HEK293 (cell line): ENCODE measurements at regions of chr14 and their contacts with region 1.

Region 1: DNA sequence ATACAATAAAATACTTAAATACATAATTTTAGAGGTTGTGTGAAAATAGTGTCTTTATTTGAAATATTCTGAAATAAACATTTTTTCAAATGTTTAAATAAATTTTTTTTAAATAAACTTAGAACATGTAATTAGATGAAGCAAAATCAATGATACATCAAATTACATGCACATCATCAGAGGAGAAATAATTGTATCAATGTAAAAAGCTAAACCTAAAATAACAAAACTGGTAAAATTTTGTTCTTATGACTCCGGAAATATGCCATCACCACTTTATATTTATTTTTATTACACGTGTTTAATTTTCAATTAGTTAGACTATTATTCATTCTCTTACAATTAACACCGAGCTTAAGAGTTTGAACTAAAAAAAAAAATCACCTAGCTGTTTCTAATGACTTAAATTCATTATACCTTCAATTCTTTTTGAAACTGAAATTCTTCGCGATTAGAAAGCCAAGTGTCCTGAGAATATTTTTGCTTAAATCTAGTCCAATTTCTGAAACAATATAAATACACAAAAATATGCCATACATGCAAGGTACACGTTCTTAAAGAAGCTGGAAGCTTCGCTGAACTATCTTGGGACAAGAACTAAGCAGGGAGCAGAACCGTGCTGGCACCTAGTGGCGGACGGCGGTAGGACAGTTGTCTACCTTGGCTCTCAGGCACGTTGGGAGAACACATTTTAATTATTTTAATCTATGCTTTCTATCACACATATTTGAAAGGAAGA is 230.5 kb downstream of the SLC25A21 start:
- H3K4me3 ChIP-seq: no peak overlapping the region
- H3K27ac ChIP-seq: no peak overlapping the region
- H3K4me1 ChIP-seq: peaks cover 13% of the 10 kb centered on the region
- CTCF ChIP-seq: peak; percentile 66

Region 2: DNA sequence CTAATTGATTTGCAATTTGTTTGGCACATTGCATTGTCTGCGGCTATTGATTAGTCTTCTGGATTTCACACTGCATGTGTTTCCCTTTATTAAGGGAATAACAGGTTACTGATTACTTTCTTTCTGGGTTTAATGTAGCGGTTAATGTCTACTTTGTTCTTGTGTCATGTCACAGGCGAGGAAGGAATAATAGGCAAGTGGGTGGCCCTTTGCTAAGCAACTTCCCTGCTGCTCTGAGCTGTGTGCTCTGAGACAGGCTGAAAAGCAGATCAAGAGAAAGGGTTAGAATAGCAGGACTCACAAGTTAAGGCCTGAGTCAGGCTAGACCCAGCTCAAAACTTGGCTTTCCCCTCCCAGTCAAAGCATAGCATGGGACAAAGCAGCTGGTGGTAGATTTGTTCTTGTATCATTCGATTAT is 499.1 kb before region 1 on chr14:
- CTCF ChIA-PET with region 1: no interaction called
- POLR2A ChIA-PET with region 1: no interaction called
- H3K4me3 ChIP-seq: no peak overlapping the region
- H3K27ac ChIP-seq: no peak overlapping the region
- H3K4me1 ChIP-seq: no peaks in the 10 kb centered on the region
- CTCF ChIP-seq: no peak

Region 3: DNA sequence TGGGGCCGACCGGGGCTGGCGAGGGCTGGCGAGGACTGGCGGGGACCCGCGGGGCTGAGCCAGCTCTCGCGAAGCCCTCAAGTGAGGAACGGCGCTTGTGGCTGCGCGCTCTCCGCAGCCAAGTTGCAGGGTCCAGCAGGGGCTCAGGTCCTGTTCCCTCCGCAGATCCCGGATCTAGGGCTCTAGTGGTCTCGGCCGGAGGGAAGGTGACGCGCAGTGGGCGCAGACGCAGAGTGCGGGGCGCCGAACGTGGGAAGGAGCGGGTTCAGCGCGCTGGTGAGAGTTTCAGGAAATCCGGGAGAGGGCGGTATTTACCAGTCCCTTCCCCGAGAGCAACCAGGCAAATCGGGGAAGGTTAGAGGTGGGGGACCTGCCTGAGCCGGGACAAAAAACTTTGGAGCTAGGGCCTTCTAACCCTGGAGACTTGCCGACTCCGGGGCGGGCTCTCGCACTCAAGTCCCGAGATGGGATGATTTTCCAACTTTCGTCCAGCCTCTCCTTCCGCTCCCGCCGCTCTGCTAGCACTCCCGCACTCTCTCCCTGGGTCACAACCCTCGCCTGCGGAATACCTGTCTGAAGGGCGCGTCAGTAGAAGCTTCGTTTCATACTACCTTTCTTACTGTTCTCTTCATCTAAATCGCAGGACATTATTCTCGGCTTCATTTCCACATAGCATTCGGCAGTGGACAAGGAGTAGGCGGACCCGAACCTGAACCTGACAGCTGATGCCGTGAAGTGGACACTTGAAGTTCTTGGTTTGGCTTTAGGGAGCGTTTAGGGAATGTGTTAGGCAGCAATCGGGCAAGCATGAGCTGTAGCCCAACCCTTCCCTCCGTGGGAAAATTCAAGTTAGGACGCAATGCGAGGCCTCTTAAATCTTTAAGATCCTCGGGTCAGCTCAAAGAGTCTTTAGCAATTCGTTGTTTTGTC is 293.9 kb before region 1 on chr14:
- CTCF ChIA-PET with region 1: interaction called, 55 read pairs
- POLR2A ChIA-PET with region 1: no interaction called
- H3K4me3 ChIP-seq: peak overlapping the region; percentile 47
- H3K27ac ChIP-seq: peak overlapping the region; percentile 70; the same call in 1 of the 2 replicates
- H3K4me1 ChIP-seq: peaks cover 15% of the 10 kb centered on the region
- CTCF ChIP-seq: no peak

Region 4: GRCh38 chr14:36773136-36773540 is 168.8 kb before region 1 on chr14:
- CTCF ChIA-PET with region 1: interaction called, 15 read pairs
- POLR2A ChIA-PET with region 1: no interaction called
- H3K4me3 ChIP-seq: no peak overlapping the region
- H3K27ac ChIP-seq: no peak overlapping the region
- H3K4me1 ChIP-seq: peaks cover 35% of the 10 kb centered on the region
- CTCF ChIP-seq: peak; percentile 42; the same call in 1 of the 2 replicates

Region 5: GRCh38 chr14:36874396-36875161 is 67.4 kb before region 1 on chr14:
- CTCF ChIA-PET with region 1: no interaction called
- POLR2A ChIA-PET with region 1: no interaction called
- H3K4me3 ChIP-seq: no peak overlapping the region
- H3K27ac ChIP-seq: no peak overlapping the region
- H3K4me1 ChIP-seq: peaks cover 5% of the 10 kb centered on the region
- CTCF ChIP-seq: no peak

Region 6: GRCh38 chr14:37116933-37117849 is 175.2 kb after region 1 on chr14:
- CTCF ChIA-PET with region 1: interaction called, 23 read pairs
- POLR2A ChIA-PET with region 1: no interaction called
- H3K4me3 ChIP-seq: peak overlapping the region; percentile 15; the same call in 1 of the 2 replicates
- H3K27ac ChIP-seq: peak overlapping the region; percentile 89
- H3K4me1 ChIP-seq: peaks cover 26% of the 10 kb centered on the region
- CTCF ChIP-seq: peak; percentile 72; the same call in 1 of the 2 replicates